AG04449 (cell line): ENCODE measurements at regions of chr6 and their contacts with region 1.

Region 1: DNA sequence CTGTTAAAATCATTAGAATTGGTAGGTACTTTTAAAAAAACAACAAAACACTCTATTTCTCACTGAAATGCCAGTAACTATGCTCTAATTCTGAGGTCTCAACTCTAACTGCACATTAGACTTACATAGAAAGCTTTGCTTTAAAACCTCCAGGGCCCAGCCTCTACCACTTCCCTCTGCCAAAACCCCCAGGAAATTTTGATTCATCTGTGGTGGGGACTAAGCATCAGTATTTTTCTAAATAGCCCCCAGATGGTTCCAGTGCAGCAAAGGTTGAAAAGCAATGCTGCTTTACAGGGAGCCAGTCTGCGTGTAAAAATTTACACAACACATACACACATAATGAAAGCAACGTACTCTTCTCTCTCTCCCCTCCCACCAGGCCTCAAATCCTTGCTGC is 3.8 kb downstream of the TBC1D32 start:
- DNase-seq: no peak
- H3K4me3 ChIP-seq: no peak overlapping the region
- CTCF ChIP-seq: no peak

Region 2: DNA sequence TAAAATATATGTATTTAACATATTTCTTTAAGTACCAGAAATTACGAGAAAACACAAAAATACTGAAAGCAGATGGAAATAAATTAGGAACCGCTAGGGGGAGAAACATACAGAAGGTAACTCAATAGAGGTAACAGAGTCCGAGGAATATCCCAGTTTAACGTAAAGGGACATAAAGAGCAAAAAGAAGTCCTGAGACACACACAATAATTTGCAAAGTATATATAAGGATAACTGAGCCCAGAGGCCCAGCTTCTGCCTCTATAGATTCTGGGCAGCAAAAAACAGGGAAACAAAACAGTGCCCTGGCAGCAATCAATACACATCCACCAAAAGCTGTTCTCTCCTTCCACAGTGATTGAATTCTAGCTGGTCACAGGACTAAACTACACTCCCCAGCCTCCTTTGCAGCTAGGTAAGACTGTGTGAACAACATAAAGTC is 11.4 kb before region 1 on chr6:
- CTCF ChIA-PET with region 1: interaction called, 35 read pairs
- POLR2A ChIA-PET with region 1: no interaction called
- DNase-seq: no peak
- H3K4me3 ChIP-seq: no peak overlapping the region
- CTCF ChIP-seq: peak; percentile 13